Breast epithelium (tissue), 4 donors: ENCODE measurements at regions of chr13 and their contacts with region 1.

Region 1: DNA sequence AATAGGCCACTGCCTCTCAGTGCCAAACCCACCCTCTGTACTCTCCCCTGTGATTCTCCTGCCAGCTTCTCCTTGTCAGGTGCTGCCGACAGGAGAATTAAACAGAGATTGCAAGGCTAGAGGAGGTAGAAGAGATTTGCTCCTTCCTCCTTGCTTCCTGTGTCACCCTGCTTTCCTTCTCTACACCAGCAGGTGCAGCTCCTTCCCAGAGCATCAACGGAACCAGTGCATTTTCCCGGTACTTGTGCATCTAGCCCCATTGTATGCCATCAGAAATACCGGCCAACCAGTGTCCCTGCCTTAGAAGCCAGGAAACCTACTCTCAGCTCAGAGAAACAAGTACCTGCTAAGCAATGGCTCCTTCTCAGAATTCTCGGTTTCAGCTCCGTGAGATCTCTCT is 253.2 kb downstream of the SUCLA2 start:
- DNase-seq: no peak
- H3K4me3 ChIP-seq: no peak overlapping the region
- H3K27ac ChIP-seq: no peak overlapping the region
- H3K4me1 ChIP-seq: no peaks in the 10 kb centered on the region
- H3K27me3 ChIP-seq: no peaks in the 10 kb centered on the region
- CTCF ChIP-seq: no peak
- POLR2A ChIP-seq: no peak

Region 2: GRCh38 chr13:46530084-46530935 is 1217.6 kb before region 1 on chr13:
- intact Hi-C with region 1: no loop called
- DNase-seq: no peak
- H3K4me3 ChIP-seq: no peak overlapping the region
- H3K27ac ChIP-seq: no peak overlapping the region
- H3K4me1 ChIP-seq: no peaks in the 10 kb centered on the region
- H3K27me3 ChIP-seq: no peaks in the 10 kb centered on the region
- CTCF ChIP-seq: no peak
- POLR2A ChIP-seq: no peak

Region 3: DNA sequence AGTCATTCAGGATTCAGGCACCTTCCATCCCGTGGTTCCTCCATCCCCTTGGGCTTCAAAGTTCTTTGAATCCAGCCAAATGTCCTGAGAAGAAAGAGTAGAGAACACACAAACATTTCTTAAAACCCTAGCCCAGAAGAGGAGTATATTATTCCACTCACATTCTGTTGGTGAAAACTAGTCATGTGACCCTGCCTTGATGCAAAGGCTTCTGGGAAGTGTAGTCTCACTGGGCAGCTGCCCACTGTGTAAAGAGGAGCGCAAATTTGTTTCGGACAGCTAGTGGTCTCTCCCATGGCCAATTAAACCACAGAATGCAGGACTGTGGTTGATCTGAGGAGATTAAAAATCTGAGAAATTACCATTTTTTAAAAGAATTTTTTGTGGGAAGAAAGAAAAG is 51.2 kb before region 1 on chr13:
- intact Hi-C with region 1: loop called (anchors 2 kb)
- DNase-seq: no peak
- H3K4me3 ChIP-seq: no peak overlapping the region
- H3K27ac ChIP-seq: no peak overlapping the region
- H3K4me1 ChIP-seq: no peaks in the 10 kb centered on the region
- H3K27me3 ChIP-seq: no peaks in the 10 kb centered on the region
- CTCF ChIP-seq: no peak
- POLR2A ChIP-seq: no peak

Region 4: GRCh38 chr13:47774671-47774994 is 26.7 kb after region 1 on chr13:
- intact Hi-C with region 1: no loop called
- DNase-seq: no peak
- H3K4me3 ChIP-seq: no peak overlapping the region
- H3K27ac ChIP-seq: no peak overlapping the region
- H3K4me1 ChIP-seq: no peaks in the 10 kb centered on the region
- H3K27me3 ChIP-seq: no peaks in the 10 kb centered on the region
- CTCF ChIP-seq: no peak
- POLR2A ChIP-seq: no peak